ENCODE measurements at regions of chr5 and their contacts with region 1.

Region 1: GRCh38 chr5:23507278-23507685 is at the start of gene PRDM9:
- DNase-seq: peak in 1 of 2 donors; percentile 59
- H3K4me3 ChIP-seq: peak within 1 kb of the TSS in 1 of 3 donors; percentile 41
- H3K27ac ChIP-seq: no peak within 1 kb of the TSS
- H3K4me1 ChIP-seq: no peaks in the 10 kb centered on the region
- H3K27me3 ChIP-seq: no peaks in the 10 kb centered on the region
- CTCF ChIP-seq: no peak
- POLR2A ChIP-seq: no peak
- total RNA-seq, gene PRDM9: not detected

Region 2: DNA sequence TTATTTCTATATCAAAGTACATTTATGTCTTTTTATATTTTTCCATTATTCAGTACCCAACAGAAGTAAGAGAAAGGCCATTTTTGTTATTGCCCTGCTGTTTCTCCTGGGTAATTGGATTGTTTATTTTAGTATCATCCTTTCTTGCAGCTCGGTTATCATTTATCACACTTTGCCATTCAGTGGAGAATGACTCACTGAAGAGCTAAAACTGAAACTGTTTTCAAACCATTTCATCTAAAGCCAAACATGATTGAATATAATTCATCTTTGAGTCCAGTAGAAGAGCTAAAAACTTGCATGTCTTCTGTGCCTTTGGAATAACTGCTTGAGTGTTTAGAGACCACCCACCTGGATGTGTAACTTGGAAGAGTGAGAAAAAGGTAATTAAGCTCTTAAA is 139.4 kb before region 1 on chr5:
- intact Hi-C with region 1: no loop called
- DNase-seq: no peak
- H3K4me3 ChIP-seq: no peak overlapping the region
- H3K27ac ChIP-seq: no peak overlapping the region
- H3K4me1 ChIP-seq: no peaks in the 10 kb centered on the region
- H3K27me3 ChIP-seq: no peaks in the 10 kb centered on the region
- CTCF ChIP-seq: no peak
- POLR2A ChIP-seq: no peak

Region 3: DNA sequence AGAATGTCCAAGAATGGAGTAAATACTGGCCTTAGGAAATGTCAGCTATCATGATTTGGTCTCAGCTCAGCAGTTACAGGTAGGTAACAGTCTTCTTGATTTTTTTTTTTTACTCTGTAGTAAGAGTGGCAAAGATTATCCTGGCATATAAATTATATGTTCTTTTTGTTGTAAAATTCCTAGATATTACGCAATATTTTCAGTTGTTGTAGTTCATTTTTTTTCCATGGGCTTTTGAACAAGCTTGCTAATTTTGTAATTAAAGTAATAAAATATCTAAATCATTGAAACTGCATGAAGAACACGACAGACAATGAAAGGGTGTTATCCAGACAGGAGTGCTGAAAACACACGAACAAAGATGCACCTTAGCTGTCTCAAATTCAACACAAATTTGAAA is 249.5 kb after region 1 on chr5:
- intact Hi-C with region 1: loop called (anchors 10 kb)
- DNase-seq: no peak
- H3K4me3 ChIP-seq: no peak overlapping the region
- H3K27ac ChIP-seq: no peak overlapping the region
- H3K4me1 ChIP-seq: no peaks in the 10 kb centered on the region
- H3K27me3 ChIP-seq: no peaks in the 10 kb centered on the region
- CTCF ChIP-seq: no peak
- POLR2A ChIP-seq: no peak